ENCODE measurements at regions of chr16 and their contacts with region 1.

Region 1: DNA sequence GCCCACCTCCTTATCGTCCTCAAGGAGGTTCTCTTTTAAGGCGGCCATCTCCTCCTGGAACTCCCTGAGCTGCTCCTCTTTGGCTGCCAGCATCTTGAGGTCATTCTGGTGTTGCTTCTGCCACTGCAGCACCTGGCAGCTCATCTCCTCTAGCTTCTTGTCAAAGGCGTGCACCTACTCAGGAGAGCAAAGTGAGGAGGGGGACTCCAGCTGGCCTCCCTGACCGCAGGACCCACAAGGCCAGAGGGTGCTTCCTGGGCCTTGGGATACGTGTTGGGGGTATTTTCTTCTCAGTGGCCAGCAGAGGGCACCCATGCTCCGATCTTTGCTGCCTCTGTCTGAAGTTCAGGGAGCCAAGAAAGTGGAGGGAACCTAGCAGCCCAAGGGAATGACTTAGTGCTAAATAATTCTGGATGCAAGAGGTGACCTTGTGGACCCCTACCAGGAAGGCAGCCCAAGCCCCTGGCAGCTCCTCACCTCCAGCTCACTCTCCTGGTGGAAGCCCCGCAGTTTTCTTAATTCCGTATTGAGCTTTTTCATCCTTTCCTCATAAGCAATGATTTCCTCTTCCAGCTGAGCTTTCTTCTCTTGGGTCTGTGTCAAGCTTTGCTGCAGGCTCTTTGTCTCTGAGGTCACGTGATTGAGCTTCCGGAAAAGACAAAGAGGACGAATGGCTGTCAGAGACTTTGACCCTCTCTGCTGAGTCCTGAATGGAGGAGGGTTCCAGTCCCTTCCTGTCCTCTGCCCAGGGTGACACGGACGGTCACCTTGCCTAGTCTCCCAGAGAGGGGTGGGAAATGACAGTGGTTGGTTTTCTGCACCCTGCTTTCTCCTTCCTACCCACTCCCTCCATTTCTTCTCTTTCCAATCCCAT is 31.4 kb downstream of the DHX38 start:
- DNase-seq: peak; percentile 73 to 81 (median 74)
- ATAC-seq: peak; percentile 95
- H3K4me3 ChIP-seq: no peak overlapping the region
- H3K27ac ChIP-seq: no peak overlapping the region
- H3K4me1 ChIP-seq: peaks cover 0 to 8% of the 10 kb centered on the region in 2 experiments; a peak in 1 of 5 replicates
- H3K27me3 ChIP-seq: peaks cover 5 to 10% of the 10 kb centered on the region in 2 experiments; a peak in 4 of 5 replicates
- CTCF ChIP-seq: peak; percentile 81 to 91 (median 90)
- EP300 ChIP-seq: no peak
- POLR2A ChIP-seq: no peak
- RAD21 ChIP-seq: peak; percentile 76 to 84

Region 2: DNA sequence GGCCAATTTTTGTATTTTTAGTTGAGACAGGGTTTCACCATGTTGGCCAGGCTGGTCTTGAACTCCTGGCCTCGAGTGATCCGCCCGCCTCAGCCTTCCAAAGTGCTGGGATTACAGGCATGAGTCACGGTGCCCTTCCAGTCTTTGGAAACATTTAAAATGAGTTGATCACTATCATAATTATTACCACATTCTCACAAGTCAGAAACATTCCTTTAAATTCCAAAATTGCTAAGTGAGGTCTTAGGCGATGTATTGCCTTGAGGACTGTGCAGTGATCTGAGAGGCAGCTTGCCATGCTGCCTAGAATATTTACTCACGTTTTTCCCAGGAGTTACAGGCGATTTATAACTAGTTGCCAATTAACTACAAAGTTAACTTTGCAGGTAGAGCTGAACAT is 285.0 kb before region 1 on chr16:
- CTCF ChIA-PET with region 1: no interaction called
- POLR2A ChIA-PET with region 1: no interaction called
- in situ Hi-C with region 1: no loop called
- intact Hi-C with region 1: no loop called
- DNase-seq: no peak
- ATAC-seq: no peak
- H3K4me3 ChIP-seq: no peak overlapping the region
- H3K27ac ChIP-seq: no peak overlapping the region
- H3K4me1 ChIP-seq: peaks cover 3 to 5% of the 10 kb centered on the region in 2 experiments; a peak in 3 of 5 replicates
- H3K27me3 ChIP-seq: no peaks in the 10 kb centered on the region
- CTCF ChIP-seq: no peak
- EP300 ChIP-seq: no peak
- POLR2A ChIP-seq: no peak
- RAD21 ChIP-seq: no peak

Region 3: DNA sequence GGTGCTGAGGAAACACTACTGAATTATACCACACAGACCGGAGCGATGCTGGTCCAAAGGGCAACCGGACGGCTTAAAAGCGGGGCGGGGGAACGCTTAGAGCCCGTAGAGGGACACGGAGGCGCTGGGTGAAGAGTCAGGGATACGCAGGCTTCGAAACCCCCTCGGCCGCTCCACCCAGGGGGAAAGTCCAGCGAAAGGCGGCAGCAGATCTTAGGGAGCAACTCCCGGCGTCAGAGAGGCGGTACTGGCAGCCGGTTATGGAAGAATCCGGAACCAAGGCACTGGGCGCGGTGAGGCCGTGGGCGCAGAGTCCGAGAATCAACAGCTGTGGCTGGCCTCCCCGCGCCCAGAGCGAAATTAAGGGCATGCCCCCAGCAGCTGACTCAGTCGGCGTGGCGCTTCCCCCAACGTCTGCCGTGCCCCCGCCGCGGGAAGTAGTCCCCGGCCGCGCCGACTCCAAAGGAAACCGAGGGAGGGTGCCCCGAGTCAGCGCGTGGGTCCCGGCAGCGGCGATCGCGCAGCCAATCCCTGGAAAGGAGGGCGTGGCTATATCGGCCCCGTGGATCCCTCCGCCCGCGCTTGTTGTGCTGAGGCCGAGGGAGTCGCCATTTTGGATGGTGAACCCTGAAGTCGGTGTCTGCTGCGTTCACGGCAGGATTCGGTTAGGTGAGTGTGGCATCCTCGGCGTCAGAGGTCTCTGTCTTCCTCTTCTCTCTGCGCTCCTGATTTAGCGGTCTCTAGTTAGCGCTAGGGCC is 229.9 kb before region 1 on chr16 and contains the start of gene IST1:
- CTCF ChIA-PET with region 1: no interaction called
- POLR2A ChIA-PET with region 1: no interaction called
- in situ Hi-C with region 1: no loop called
- intact Hi-C with region 1: no loop called
- DNase-seq: peak; percentile 95 to 99 (median 96)
- ATAC-seq: peak; percentile 89
- H3K4me3 ChIP-seq: peak within 1 kb of the TSS; percentile 92
- H3K27ac ChIP-seq: peak within 1 kb of the TSS; percentile 88
- H3K4me1 ChIP-seq: peaks cover 7 to 25% of the 10 kb centered on the region in 2 experiments; a peak in 4 of 5 replicates
- H3K27me3 ChIP-seq: no peaks in the 10 kb centered on the region
- CTCF ChIP-seq: no peak; a peak in 1 of 6 replicates
- EP300 ChIP-seq: no peak
- POLR2A ChIP-seq: peak; percentile 95
- RAD21 ChIP-seq: no peak
- polyA plus RNA-seq, gene IST1: 139 to 257 TPM

Region 4: DNA sequence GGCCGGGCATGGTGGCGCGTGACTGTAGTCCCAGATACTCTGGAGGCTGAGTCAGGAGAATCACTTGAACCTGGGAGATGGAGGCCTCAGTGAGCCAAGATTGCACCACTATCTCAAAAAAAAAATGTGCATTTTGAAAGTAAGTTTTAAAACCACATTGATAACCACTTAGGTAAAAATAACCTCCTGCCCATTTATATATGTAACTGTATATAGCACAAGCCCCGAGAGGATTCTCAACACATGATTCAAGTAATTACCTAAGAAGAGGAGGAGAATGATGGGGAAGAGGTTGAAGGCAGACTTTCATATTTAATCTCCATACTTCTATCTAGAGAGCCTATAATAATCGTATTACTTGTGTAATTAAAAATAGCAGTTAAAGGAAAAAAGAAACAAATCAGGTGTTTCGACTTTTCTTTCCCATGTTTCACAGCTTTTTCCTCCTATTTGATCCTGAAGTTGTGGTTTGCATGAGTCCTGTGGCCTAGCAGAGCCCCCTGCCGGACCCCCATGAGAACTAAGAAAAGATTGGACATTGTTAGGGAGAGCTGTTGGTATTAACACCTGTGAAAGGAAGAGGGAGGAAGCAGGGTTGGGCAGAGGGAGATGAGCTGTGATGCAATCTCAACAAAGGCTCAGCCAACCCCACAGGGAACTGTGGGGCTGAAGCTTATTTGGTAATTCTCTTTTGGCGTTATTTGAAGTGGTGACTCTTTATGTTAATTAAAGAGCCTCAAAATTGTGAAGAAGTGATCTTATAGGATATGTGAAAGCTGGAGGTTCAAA is 24.9 kb after region 1 on chr16:
- CTCF ChIA-PET with region 1: no interaction called
- POLR2A ChIA-PET with region 1: interaction called, 5 read pairs
- in situ Hi-C with region 1: no loop called
- intact Hi-C with region 1: loop called (anchors 2 kb)
- DNase-seq: peak in 2 of 4 experiments; percentile 24 to 25
- ATAC-seq: peak; percentile 70
- H3K4me3 ChIP-seq: no peak overlapping the region
- H3K27ac ChIP-seq: no peak overlapping the region
- H3K4me1 ChIP-seq: no peaks in the 10 kb centered on the region; a peak in 1 of 5 replicates
- H3K27me3 ChIP-seq: no peaks in the 10 kb centered on the region; a peak in 1 of 5 replicates
- CTCF ChIP-seq: peak; percentile 45 to 48 (median 46); a peak in 5 of 6 replicates
- EP300 ChIP-seq: no peak
- POLR2A ChIP-seq: no peak
- RAD21 ChIP-seq: peak in 1 of 2 experiments; percentile 59; a peak in 2 of 4 replicates

Region 5: DNA sequence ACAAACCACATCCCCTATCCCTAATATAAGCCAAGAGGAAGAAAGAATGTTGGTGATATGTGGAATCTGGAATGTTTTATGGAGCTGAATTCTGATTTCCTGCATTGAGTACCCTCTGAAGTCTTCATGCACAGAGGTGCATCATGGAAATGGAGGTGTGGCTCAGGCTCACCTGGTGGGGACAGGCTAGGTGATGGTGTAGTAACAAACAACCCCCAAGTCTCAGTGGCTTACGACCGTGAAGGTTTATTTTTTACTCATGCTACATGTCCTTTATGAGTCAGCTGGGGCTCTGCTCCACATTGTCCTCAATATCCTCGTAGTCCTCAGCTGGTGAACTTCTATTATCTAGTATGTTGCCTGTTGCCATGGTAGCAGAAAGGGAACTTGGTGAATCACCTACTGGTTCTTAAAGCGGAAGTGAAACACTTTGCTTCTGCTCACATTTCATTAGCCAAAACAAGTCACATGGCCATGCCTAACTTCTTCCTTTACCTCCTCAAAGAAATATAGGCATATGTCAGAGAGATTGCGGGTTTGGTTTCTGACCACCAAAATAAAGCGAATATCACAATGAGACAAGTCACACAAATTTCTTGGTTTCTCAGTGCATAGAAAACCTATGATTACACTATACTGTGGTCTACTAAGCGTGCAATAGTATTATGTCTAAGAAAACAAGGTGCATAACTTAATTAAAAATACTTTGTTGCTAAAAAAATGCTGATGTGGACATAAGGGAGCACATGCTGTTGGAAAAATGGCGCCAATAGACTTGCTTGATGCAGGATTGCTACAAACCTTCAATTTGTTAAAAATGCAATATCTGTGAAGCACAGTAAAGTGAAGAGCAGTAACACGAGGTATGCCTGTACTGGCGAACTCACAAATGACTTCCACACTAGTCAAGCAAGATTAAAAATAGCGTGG is 47.4 kb after region 1 on chr16 and contains the start of gene PMFBP1:
- CTCF ChIA-PET with region 1: no interaction called
- POLR2A ChIA-PET with region 1: no interaction called
- in situ Hi-C with region 1: no loop called
- intact Hi-C with region 1: no loop called
- DNase-seq: peak in 3 of 4 experiments; percentile 14 to 45 (median 19)
- ATAC-seq: peak; percentile 65
- H3K4me3 ChIP-seq: no peak within 1 kb of the TSS
- H3K27ac ChIP-seq: no peak within 1 kb of the TSS
- H3K4me1 ChIP-seq: no peaks in the 10 kb centered on the region
- H3K27me3 ChIP-seq: no peaks in the 10 kb centered on the region
- CTCF ChIP-seq: no peak
- EP300 ChIP-seq: no peak
- POLR2A ChIP-seq: no peak
- RAD21 ChIP-seq: no peak
- polyA plus RNA-seq, gene PMFBP1: 0.15 to 0.41 TPM

Region 6: DNA sequence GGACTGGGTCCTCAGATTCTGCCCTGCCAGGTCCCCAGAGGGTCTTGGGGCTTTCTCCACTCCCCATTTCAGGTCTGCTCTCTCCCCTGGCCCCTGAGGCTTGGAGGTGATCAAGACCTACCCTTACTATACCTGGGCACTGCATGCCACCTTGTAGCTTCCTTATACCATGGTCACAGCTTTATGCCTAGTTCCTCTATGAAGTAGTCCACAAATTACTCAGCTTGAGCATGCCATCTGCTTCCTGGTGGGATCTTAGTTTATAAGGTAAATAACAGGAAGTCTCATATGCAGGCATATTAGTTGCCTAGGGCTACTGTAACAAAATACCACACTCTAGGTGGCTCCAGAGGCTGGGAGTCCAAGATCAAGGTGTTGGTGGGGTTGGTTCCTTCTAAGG is 58.0 kb after region 1 on chr16:
- CTCF ChIA-PET with region 1: no interaction called
- POLR2A ChIA-PET with region 1: no interaction called
- in situ Hi-C with region 1: no loop called
- intact Hi-C with region 1: no loop called
- DNase-seq: no peak
- ATAC-seq: no peak
- H3K4me3 ChIP-seq: no peak overlapping the region
- H3K27ac ChIP-seq: no peak overlapping the region
- H3K4me1 ChIP-seq: no peaks in the 10 kb centered on the region
- H3K27me3 ChIP-seq: peaks cover 0 to 8% of the 10 kb centered on the region in 2 experiments; a peak in 2 of 5 replicates
- CTCF ChIP-seq: no peak
- EP300 ChIP-seq: no peak
- POLR2A ChIP-seq: no peak
- RAD21 ChIP-seq: no peak

Region 7: DNA sequence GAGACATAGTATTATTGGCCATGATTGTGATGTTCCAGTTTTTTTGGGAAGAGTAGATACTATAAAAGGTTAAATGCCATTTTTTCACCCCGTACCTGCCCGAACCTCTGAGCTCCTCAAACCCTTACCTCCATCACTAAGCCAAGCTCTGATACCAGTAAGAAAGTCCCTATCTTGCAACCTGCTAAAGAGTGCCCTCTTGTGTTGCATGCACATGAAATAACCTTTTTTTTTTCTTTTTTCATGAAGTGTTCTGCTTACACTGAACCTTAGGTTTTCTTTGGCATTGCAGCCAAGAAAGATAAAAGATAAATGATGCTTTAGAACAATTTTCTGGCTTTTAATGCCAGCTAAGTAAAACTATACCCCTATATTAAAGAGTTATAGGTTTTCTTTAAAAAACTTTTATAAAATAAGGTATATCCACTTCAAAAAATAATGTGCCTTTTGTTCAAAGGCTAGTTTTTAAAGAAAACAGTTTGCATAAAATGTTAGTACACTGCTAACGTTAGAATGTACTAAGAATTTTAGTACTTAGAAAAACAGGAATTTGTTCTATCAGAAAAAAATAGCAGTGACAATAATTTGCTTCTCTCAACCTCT is 342.3 kb after region 1 on chr16:
- CTCF ChIA-PET with region 1: interaction called, 3 read pairs
- POLR2A ChIA-PET with region 1: no interaction called
- in situ Hi-C with region 1: no loop called
- intact Hi-C with region 1: loop called (anchors 5 kb)
- DNase-seq: peak; percentile 7 to 30 (median 11)
- ATAC-seq: peak; percentile 66
- H3K4me3 ChIP-seq: no peak overlapping the region
- H3K27ac ChIP-seq: no peak overlapping the region
- H3K4me1 ChIP-seq: no peaks in the 10 kb centered on the region
- H3K27me3 ChIP-seq: no peaks in the 10 kb centered on the region
- CTCF ChIP-seq: peak; percentile 48 to 63 (median 53); a peak in 5 of 6 replicates
- EP300 ChIP-seq: no peak
- POLR2A ChIP-seq: no peak
- RAD21 ChIP-seq: peak; percentile 39 to 59; a peak in 3 of 4 replicates

Region 8: DNA sequence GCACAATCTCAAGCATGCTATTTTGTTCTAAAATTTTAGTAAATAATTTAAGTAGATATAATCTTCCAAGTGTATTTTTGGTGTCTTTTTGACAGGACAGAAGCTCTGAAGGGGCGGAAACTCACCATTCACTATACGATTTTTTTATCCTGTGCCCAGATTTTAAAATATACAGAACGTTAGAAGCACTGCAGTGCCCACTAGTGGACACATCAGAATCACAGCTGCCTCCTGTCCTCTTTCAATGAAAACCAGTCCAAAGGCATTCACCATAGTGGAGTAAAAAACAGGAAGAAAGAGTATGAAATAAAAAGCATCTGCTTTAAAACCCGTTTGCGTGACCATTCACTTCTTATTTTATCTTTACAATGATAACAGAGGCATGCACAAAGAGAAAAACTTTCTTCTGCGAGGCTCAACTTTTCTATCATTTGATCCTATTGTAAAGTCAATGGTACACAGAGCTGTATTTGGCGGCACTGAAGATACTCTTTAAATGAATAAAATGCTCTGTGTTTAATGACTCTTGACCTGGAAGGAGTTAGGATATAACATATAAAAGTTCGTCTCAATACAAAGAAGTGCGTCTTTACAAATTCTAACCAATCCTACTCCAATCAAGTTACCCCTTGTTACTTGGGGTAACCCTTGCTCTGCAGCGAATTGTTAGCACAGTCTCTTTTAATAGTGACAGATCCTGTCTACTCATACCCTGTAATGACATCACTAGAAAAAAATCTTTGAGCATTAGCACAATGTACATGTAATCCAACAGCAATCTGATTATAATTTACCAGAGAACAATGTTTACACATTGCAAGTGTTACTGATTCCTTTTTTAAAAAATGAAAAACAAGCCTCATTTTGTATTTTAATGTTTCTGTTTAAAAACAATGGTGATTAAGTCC is 1831.8 kb after region 1 on chr16:
- CTCF ChIA-PET with region 1: no interaction called
- POLR2A ChIA-PET with region 1: no interaction called
- in situ Hi-C with region 1: no loop called
- intact Hi-C with region 1: loop called (anchors 5 kb)
- DNase-seq: peak; percentile 44 to 61 (median 51)
- ATAC-seq: peak; percentile 71; the same call in 2 of the 3 replicates
- H3K4me3 ChIP-seq: no peak overlapping the region
- H3K27ac ChIP-seq: no peak overlapping the region
- H3K4me1 ChIP-seq: no peaks in the 10 kb centered on the region
- H3K27me3 ChIP-seq: no peaks in the 10 kb centered on the region
- CTCF ChIP-seq: peak; percentile 58 to 79 (median 76); a peak in 5 of 6 replicates
- EP300 ChIP-seq: no peak
- POLR2A ChIP-seq: no peak
- RAD21 ChIP-seq: peak; percentile 41 to 71